ENCODE measurements at regions of chr4 and their contacts with region 1.

Region 1: GRCh38 chr4:8176547-8177399 is 18.2 kb upstream of the ABLIM2 start:
- DNase-seq: no peak
- H3K4me3 ChIP-seq: no peak overlapping the region
- CTCF ChIP-seq: peak; percentile 86

Region 2: GRCh38 chr4:8162625-8163024 is 14.1 kb before region 1 on chr4:
- CTCF ChIA-PET with region 1: interaction called, 17 read pairs
- POLR2A ChIA-PET with region 1: no interaction called
- DNase-seq: no peak
- H3K4me3 ChIP-seq: no peak overlapping the region
- CTCF ChIP-seq: no peak

Region 3: DNA sequence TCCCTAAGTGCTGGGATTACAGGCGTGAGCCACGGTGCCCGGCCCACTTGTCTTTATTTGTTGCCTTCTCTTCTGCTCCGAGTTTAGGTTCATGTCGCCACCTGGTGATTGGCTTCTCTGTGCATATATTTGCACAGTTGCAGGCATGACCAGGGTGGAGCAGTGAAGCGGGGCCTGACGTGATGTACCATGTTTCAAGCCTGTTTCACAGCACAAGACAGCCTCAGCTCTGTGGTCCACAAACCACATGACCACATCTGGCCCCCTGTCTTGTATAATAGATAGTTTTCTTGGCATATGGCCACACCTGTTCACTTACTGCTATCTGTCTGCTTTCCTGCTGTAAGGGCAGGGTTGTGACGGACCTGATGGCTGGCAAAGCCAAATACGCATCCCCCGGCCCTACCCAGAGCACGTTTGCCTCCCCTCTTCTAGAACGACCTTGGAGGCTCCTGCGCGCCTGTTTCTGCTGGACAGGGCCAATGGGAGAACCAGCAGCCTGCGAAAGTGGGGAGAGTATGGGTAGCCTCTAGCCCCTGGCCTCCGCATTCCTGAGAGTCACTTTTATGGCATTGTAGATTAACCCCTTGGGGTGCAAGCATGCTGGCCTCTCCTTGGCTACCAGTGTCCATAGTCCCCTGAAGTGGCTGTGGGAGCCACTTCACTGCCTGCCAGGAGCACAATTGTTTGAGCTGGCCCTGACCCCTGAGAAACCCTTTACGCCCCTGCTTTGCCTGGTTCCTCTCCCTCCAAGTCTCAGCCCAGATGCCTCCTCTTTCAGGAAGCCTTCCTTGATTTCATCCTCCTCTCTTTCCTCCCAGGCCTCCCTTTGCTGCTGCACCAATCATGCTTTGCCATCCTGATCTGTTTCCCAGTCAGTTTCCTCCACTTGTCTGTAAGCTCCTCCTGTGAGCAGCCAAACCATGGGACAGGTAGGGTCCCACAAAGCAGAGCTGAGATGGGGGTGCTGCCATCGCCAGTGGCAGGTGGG is 16.3 kb after region 1 on chr4:
- CTCF ChIA-PET with region 1: interaction called, 14 read pairs
- POLR2A ChIA-PET with region 1: no interaction called
- DNase-seq: no peak
- H3K4me3 ChIP-seq: no peak overlapping the region
- CTCF ChIP-seq: peak; percentile 20

Region 4: DNA sequence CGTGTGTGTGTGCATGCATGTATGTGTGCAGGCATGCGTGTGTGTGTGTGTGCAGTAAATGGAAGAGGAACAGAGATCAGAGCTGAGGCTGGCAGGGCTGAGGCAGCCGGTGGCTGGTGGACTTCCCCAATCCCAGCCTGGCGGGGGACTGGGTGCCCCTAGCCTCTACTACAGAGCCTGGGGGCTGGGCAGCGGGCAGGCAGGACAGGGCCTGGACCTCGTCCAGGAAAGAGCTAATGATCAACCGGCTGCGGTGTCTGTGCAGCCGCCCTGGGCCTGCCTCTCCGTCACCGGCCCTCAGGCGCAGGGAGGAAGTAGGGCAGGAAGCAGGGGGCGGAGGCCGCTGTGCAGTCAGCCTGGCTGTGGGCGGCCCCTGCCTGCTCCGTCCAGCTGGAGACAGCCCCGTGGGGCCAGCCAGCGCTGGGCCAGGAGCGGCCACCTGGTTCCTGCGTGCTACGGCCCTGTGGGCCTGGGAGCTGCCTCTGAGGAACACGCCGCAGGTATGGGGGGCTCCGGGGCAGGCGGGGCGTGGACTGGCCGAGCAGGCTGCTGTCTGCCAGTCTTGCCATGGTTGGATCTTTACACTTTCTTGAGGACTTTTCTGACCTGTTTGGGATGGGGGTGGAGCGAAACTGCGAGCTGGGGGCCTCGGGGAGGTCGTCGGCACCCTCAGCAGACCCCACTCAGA is 22.3 kb after region 1 on chr4 and contains the start of gene SH3TC1:
- CTCF ChIA-PET with region 1: interaction called, 12 read pairs
- POLR2A ChIA-PET with region 1: no interaction called
- DNase-seq: no peak
- H3K4me3 ChIP-seq: peak within 1 kb of the TSS; percentile 18
- CTCF ChIP-seq: no peak

Region 5: GRCh38 chr4:8410641-8411271 is 234.0 kb after region 1 on chr4:
- CTCF ChIA-PET with region 1: interaction called, 16 read pairs
- POLR2A ChIA-PET with region 1: no interaction called
- DNase-seq: no peak
- H3K4me3 ChIP-seq: no peak overlapping the region
- CTCF ChIP-seq: peak; percentile 20